ENCODE measurements at regions of chr10 and their contacts with region 1.

Region 1: DNA sequence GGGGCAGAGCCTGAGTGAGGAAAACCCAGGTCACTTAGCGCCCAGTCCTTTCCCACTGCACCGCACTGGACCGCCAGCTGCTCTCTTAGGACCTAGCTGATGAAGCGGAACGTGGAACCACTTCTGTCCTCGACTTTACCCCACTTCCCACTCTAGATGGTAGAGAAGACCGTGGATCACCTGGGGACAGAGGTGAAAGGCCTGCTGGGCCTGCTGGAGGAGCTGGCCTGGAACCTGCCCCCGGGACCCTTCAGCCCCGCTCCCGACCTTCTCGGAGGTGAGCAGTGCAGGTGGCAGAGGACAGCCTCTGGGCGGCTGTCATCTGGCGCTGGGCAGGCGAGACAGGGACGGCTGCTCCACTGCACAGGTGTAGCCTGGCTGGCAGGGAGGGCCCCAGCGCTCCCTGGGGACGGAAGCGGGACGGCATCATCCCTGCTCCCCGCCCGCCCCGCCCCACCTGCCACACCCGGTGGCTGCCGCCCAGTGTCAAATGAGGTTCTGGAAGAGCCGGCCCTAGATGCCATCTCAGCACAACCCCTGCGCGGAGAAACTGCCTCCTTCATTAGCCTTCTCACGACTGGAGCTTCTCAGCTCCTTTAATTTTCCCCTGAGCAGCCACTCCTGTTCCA is 11.7 kb downstream of the PLAC9 start:
- DNase-seq: peak in 1 of 2 experiments; percentile 32
- H3K4me3 ChIP-seq: peak overlapping the region; percentile 17
- H3K4me1 ChIP-seq: peaks cover 16% of the 10 kb centered on the region
- H3K27me3 ChIP-seq: 0 out of 2 replicates have a peak, but pooled peaks cover 3% of the 10 kb centered on the region

Region 2: DNA sequence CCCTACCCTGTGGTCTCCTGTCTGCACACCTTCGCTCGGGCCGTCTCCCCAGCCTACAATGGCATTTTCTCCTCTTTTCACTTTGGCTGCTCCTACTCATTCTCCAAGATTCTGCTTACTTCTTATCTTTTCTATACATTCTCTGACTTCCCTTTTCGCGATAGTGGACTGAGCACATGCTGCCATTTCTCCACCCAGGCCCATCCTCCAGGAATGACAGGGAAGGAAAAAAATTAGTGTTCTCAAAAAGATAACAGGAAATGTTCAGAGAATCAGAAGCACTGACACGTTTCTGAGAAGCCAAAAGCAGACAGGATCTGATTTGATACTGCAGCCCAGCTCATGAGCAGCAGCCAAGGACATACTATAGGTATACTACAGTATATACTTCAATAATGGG is 67.6 kb after region 1 on chr10:
- in situ Hi-C with region 1: loop called (anchors 10 kb)
- DNase-seq: no peak
- H3K4me3 ChIP-seq: no peak overlapping the region
- H3K4me1 ChIP-seq: no peaks in the 10 kb centered on the region
- H3K27me3 ChIP-seq: no peaks in the 10 kb centered on the region